ENCODE measurements at regions of chr20 and their contacts with region 1.

Region 1: GRCh38 chr20:62793912-62794724 is 2.2 kb upstream of the MRGBP start:
- DNase-seq: peak in 1 of 2 donors; percentile 95
- H3K4me3 ChIP-seq: peak overlapping the region; percentile 66 to 81
- H3K27ac ChIP-seq: peak overlapping the region; percentile 88
- H3K4me1 ChIP-seq: peaks cover 26% of the 10 kb centered on the region
- H3K27me3 ChIP-seq: no peaks in the 10 kb centered on the region
- CTCF ChIP-seq: no peak
- POLR2A ChIP-seq: peak in 1 of 2 donors; percentile 92

Region 2: GRCh38 chr20:62302341-62303058 is 491.6 kb before region 1 on chr20 and contains the start of gene ADRM1:
- intact Hi-C with region 1: loop called (anchors 10 kb)
- DNase-seq: peak in 1 of 2 donors; percentile 95
- H3K4me3 ChIP-seq: peak within 1 kb of the TSS; percentile 85 to 98
- H3K27ac ChIP-seq: peak within 1 kb of the TSS; percentile 97
- H3K4me1 ChIP-seq: peaks cover 39% of the 10 kb centered on the region
- H3K27me3 ChIP-seq: no peaks in the 10 kb centered on the region
- CTCF ChIP-seq: peak; percentile 93 to 96 (median 94)
- POLR2A ChIP-seq: no peak
- total RNA-seq, gene ADRM1: 110 TPM

Region 3: GRCh38 chr20:62668441-62669027 is 125.6 kb before region 1 on chr20:
- intact Hi-C with region 1: loop called (anchors 5 kb)
- DNase-seq: no peak
- H3K4me3 ChIP-seq: no peak overlapping the region
- H3K27ac ChIP-seq: no peak overlapping the region
- H3K4me1 ChIP-seq: no peaks in the 10 kb centered on the region
- H3K27me3 ChIP-seq: no peaks in the 10 kb centered on the region
- CTCF ChIP-seq: peak; percentile 52 to 79 (median 75)
- POLR2A ChIP-seq: no peak

Region 4: DNA sequence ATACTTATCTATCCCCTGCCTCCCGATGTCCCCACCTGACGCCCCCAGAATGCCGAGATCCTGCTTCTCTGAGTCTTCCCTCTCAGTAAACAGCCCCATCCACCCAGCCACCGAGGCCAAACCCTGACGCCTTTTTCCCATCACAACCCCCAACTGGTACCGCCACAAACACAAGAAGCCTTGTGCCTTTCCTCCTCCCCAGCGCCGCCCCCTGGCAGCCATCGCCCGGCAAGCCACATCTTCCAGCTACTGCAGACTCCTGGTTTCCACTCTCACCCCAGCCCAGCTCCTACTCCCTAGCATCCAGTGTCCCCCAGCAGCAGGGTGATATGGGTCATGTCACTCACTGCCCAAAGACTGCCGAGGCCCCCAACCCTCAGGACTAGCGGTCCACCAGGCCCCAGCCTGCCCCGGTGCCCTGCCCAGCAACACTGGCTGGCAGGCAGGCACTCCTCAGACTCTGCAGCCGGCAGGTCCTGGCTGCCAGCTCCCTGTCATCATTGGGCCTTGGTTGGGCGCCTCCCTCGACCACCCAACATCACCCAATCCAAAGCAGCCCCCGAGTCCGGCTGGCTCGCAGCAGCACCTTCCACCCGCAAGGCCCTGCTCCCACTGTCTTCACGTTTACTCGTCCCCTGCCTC is 56.3 kb after region 1 on chr20:
- intact Hi-C with region 1: no loop called
- DNase-seq: no peak
- H3K4me3 ChIP-seq: no peak overlapping the region
- H3K27ac ChIP-seq: no peak overlapping the region
- H3K4me1 ChIP-seq: no peaks in the 10 kb centered on the region
- H3K27me3 ChIP-seq: no peaks in the 10 kb centered on the region
- CTCF ChIP-seq: no peak
- POLR2A ChIP-seq: no peak